Mucosa of descending colon (tissue), 3 donors: ENCODE measurements at regions of chr10 and their contacts with region 1.

Region 1: GRCh38 chr10:102583435-102584417 is 60.6 kb upstream of the TRIM8 start:
- DNase-seq: peak; percentile 77 to 94 (median 83)
- ATAC-seq: peak; percentile 98
- H3K4me3 ChIP-seq: no peak overlapping the region
- H3K4me1 ChIP-seq: no peaks in the 10 kb centered on the region
- CTCF ChIP-seq: peak; percentile 83

Region 2: GRCh38 chr10:102175415-102175814 is 408.3 kb before region 1 on chr10:
- intact Hi-C with region 1: no loop called
- DNase-seq: no peak
- ATAC-seq: no peak
- H3K4me3 ChIP-seq: no peak overlapping the region
- H3K4me1 ChIP-seq: no peaks in the 10 kb centered on the region
- CTCF ChIP-seq: no peak

Region 3: DNA sequence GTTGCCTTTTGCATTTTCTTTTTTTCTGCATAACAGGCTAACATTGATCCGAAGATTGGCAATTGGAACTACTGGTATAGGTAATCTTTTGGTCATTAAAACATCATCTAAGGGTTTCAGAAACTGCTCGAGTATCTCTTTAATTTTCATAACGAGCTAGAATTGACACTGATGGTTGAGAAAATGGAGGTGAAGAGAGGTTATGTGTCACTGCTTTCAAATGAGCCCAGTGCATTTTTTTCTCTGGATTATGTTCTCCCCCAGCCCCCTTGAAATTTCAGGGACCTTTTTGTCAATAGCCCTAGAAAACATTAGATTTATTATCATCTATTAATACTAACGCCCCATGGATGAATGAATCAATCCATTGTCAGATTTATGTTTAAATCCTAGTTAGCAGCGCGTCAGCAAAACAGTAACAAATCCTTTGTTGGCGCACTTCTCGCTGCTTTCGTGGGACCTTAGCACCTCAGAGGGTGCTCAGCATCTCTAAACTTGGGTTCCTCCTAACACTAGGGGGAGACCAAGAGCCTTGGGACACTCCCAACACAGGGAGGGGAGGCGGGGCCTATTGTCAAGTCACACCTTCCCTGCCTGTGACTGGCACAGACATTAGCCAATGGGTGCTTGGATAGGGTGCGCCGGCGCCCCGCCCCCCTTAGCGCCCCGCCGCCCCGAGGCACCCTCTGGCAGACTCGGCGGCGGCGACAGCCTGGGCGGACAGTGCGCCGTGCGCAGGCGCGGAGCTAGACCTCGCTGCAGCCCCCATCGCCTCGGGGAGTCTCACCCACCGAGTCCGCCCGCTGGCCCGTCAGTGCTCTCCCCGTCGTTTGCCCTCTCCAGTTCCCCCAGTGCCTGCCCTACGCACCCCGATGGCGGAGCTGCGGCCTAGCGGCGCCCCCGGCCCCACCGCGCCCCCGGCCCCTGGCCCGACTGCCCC is 80.2 kb before region 1 on chr10 and contains the start of gene SUFU:
- intact Hi-C with region 1: loop called (anchors 5 to 10 kb)
- DNase-seq: peak; percentile 97 to 100 (median 98)
- ATAC-seq: peak; percentile 82
- H3K4me3 ChIP-seq: peak within 1 kb of the TSS; percentile 66
- H3K4me1 ChIP-seq: peaks cover 14% of the 10 kb centered on the region
- CTCF ChIP-seq: peak; percentile 80
- total RNA-seq, gene SUFU: 9.0 to 13.9 (median 9.5) TPM

Region 4: GRCh38 chr10:102523250-102524029 is 60.3 kb before region 1 on chr10:
- intact Hi-C with region 1: loop called in 1 of 2 experiments (anchors 10 kb)
- DNase-seq: no peak
- ATAC-seq: no peak
- H3K4me3 ChIP-seq: no peak overlapping the region
- H3K4me1 ChIP-seq: no peaks in the 10 kb centered on the region
- CTCF ChIP-seq: no peak

Region 5: GRCh38 chr10:102835007-102835482 is 251.3 kb after region 1 on chr10:
- intact Hi-C with region 1: no loop called
- DNase-seq: peak; percentile 50 to 87 (median 77)
- ATAC-seq: peak; percentile 90
- H3K4me3 ChIP-seq: no peak overlapping the region
- H3K4me1 ChIP-seq: no peaks in the 10 kb centered on the region
- CTCF ChIP-seq: peak; percentile 64